ENCODE measurements at regions of chr12 and their contacts with region 1.

Region 1: DNA sequence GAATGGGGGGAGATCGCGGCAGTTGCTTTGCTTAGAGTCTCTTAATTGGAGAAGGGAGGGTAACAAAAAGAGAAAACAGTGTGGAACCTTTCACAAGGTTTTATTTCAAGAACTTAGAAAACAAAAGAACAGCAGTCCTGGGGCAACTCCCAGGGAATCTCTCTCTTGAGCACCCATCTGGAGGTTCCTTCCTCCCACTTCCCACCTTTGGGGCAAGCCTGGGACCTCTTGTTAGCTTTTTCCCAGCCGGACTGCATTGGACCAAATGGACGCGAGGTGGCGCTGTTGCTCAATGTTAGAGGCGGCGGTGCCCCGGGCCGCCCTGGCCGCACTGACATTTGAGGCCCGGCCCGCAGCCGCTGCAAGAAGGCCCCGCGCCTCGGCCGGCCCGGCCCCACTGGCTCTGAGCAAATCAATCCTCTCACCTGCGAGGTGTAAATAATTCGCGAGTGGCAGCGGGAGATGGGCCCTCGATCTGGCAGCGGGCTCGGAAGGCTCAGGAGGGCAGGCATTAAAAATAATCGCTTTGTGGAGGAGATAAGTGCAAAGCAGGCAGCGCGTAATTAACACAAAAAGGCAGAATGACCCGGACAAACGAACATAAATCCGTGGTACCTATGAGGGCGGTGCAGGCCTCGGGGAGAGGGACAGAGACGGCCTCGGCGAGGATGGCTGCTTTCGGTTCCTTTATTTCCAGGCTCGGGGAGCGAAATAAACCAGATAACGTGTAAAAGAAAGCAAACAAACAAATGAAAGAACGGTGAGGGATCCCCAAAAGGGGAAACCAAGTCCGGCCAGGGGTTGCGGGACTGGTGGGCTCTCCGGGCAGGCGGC is 2.7 kb upstream of the HOXC8 start:
- DNase-seq: peak; percentile 89

Region 2: DNA sequence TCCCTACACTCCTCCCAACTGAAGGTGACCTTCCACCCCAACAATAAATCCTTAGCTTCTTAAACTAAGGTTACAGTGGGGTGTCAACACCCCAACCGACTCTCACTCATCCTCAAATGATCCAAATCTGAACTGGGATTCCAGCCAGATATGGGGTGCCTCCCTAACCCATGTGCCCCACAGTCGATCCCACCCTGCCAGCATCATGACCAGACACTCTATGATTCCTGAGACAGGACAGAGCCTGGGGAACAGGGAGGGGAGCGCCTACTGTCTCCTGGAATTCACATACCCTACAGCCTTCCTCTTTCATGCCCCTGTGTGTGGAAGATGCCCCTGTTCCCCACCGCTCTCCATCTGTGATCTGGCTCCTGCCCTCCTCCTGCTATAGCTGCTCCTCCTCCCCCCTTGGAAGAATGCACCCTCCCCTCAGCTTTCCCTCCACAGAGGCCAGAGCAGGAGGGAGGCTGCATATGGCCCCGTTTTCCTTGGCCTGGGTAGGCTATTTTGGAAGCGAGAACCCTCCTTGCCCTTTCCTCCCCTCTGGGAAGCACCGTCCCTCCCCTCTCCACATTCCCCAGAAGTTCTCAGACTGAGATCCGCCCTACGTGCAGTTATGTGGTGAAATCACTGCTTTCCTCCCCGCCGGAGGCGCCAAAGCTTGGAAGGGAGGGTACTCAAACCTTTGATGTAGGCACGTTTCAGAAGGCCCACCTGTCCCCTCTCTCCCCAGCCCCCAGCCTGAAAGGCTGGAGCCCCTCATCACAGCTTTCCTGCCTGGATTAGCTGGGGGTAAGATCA is 134.7 kb after region 1 on chr12:
- in situ Hi-C with region 1: no loop called
- DNase-seq: no peak

Region 3: GRCh38 chr12:54191550-54192022 is 185.5 kb after region 1 on chr12:
- in situ Hi-C with region 1: loop called (anchors 10 kb)
- DNase-seq: peak; percentile 96